HCT116 (cell line): ENCODE measurements at regions of chr17 and their contacts with region 1.

Region 1: DNA sequence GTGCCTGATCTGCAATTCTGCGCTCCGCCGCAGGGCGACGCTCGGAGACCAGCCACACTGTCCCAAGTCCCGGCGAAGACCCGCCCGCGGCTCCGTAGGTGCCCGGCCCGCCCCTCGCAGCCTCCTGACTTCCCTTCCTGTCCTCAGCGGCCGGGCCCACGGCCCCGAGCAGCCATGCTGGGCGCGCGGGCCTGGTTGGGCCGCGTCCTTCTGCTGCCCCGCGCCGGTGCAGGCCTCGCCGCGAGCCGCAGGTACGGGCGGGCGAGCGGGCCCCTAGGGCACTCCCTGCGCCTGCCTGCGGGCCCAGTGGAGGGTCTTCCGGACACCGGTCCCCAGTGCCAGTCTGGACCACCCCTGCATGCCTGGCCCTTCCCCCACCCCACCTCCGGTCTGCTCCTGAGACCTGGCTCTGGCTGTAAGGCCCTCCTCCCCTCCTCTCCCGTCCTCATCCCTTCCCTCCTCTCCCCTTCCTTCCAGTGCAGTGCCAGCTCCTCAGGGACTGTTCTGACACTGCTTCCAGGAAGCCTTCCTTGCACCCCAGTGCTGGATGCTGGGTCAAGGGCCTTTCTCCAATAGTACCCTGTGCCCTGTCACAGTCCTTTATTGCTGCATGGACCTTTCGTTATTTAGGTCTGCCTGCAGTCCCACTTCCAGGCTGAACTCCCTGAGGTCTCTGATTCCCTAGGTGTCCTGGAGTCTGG is at the start of gene SPATA20:
- DNase-seq: peak; percentile 80
- ATAC-seq: peak; percentile 75
- H3K4me3 ChIP-seq: peak within 1 kb of the TSS; percentile 65 to 85
- H3K27ac ChIP-seq: peak within 1 kb of the TSS; percentile 75
- H3K4me1 ChIP-seq: peaks cover 27 to 58% of the 10 kb centered on the region in 2 experiments
- H3K27me3 ChIP-seq: no peaks in the 10 kb centered on the region
- CTCF ChIP-seq: peak in 2 of 3 experiments; percentile 98 to 100; a peak in 4 of 6 replicates
- POLR2A ChIP-seq: peak; percentile 79
- RAD21 ChIP-seq: no peak
- total RNA-seq, gene SPATA20: 57.5 TPM

Region 2: DNA sequence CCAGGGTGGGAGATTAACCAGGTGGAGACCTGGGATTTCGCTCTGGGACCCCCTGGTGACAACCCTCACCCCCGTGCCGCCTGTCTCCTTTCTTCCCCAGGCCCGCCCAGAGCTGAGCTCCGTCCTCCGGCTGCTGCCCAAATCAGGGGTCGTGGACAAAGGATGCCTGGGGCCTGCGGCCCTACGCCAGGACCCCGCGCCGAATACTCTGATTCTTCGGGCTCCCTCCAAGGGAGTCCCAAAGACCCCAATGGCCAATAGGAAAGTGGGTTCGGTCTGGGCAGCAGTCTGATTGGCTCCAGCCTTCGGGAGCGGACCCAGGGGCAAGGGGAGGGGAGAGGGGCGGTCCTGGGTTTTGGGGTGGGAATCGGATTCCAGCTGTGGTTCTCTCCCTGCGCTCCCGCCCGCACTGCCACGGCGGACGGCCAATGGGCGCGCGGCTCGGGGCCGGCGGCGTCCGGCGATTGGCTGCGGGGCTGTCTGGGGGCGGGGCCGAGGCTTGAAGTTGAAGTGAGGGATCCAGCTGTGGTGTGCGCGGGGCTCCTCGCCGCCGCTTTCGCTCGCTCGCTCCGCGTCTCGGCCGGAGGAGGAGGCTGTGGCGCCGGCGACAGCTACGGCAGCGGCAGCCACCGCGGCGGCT is 13.1 kb after region 1 on chr17 and contains the start of gene CACNA1G:
- CTCF ChIA-PET with region 1: interaction called, 22 read pairs
- POLR2A ChIA-PET with region 1: interaction called, 8 read pairs
- RAD21 ChIA-PET with region 1: interaction called, 4 to 8 read pairs
- intact Hi-C with region 1: no loop called
- DNase-seq: peak; percentile 80
- ATAC-seq: peak; percentile 93
- H3K4me3 ChIP-seq: peak within 1 kb of the TSS; percentile 54 to 68
- H3K27ac ChIP-seq: peak within 1 kb of the TSS; percentile 43; the same call in 1 of the 2 replicates
- H3K4me1 ChIP-seq: peaks cover 6 to 18% of the 10 kb centered on the region in 2 experiments; a peak in 3 of 4 replicates
- H3K27me3 ChIP-seq: no peaks in the 10 kb centered on the region
- CTCF ChIP-seq: no peak
- POLR2A ChIP-seq: peak; percentile 64
- RAD21 ChIP-seq: no peak
- total RNA-seq, gene CACNA1G: 3.4 TPM

Region 3: DNA sequence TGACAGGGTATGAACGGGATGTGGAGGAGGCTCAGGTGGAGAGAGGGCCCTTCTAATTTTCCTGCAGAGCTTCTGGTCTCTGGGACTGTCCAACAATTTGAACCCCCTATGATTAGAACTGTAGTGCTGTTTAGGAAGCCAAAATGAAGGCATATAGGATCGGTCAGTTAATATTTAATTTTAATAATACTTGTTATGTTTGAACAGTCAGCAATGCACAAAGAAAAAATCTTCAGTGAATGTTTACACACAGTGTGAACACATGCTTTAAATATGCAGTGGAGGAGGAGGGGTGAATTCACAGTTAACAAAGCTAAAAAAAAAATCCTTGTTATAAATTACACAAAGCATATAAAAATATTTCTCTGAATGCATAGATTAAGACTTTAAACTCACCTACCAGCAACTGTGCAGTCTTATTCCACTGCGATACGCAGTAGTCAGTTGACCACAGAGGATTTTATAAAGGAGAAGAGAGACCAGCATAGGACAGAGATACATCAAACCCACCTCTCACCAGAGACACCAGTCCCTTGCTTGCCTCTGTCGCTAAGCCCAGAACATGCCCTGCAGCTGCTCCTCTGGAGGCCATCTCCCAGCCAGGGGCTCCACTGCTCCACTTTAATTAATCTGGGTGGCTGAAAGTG is 146.0 kb after region 1 on chr17:
- CTCF ChIA-PET with region 1: interaction called, 38 read pairs
- POLR2A ChIA-PET with region 1: no interaction called
- RAD21 ChIA-PET with region 1: interaction called in 1 of 2 experiments, 5 read pairs
- intact Hi-C with region 1: loop called (anchors 1 kb)
- DNase-seq: no peak
- ATAC-seq: no peak
- H3K4me3 ChIP-seq: no peak overlapping the region
- H3K27ac ChIP-seq: no peak overlapping the region
- H3K4me1 ChIP-seq: peaks cover 45 to 65% of the 10 kb centered on the region in 2 experiments
- H3K27me3 ChIP-seq: no peaks in the 10 kb centered on the region
- CTCF ChIP-seq: no peak
- POLR2A ChIP-seq: no peak
- RAD21 ChIP-seq: no peak

Region 4: DNA sequence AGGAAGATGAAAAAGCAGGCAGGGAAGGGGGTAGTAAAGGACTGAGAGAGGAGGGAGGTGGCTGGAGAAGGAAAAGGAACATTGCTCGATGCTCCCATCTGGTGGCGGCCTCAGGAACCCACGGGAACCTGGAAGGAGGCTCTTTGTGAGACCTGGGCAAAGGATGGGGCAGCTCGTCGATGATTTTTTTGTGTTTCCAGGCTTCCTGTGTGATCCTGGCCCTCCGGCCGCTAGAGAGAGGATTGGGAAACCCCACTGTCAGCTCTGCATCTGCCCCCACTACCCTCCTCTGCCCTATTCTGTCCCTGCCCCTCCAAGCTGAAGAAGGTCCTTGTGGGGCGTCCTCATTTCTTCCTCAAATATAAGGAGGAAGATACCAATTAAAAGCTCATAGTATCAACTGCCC is 294.8 kb after region 1 on chr17:
- CTCF ChIA-PET with region 1: interaction called, 10 read pairs
- POLR2A ChIA-PET with region 1: no interaction called
- RAD21 ChIA-PET with region 1: interaction called in 1 of 2 experiments, 3 read pairs
- intact Hi-C with region 1: loop called (anchors 1 kb)
- DNase-seq: peak; percentile 61
- ATAC-seq: peak; percentile 95
- H3K4me3 ChIP-seq: no peak overlapping the region
- H3K27ac ChIP-seq: no peak overlapping the region
- H3K4me1 ChIP-seq: peaks cover 0 to 22% of the 10 kb centered on the region in 2 experiments; a peak in 2 of 4 replicates
- H3K27me3 ChIP-seq: no peaks in the 10 kb centered on the region
- CTCF ChIP-seq: peak; percentile 94 to 97 (median 97)
- POLR2A ChIP-seq: no peak
- RAD21 ChIP-seq: peak; percentile 96

Region 5: DNA sequence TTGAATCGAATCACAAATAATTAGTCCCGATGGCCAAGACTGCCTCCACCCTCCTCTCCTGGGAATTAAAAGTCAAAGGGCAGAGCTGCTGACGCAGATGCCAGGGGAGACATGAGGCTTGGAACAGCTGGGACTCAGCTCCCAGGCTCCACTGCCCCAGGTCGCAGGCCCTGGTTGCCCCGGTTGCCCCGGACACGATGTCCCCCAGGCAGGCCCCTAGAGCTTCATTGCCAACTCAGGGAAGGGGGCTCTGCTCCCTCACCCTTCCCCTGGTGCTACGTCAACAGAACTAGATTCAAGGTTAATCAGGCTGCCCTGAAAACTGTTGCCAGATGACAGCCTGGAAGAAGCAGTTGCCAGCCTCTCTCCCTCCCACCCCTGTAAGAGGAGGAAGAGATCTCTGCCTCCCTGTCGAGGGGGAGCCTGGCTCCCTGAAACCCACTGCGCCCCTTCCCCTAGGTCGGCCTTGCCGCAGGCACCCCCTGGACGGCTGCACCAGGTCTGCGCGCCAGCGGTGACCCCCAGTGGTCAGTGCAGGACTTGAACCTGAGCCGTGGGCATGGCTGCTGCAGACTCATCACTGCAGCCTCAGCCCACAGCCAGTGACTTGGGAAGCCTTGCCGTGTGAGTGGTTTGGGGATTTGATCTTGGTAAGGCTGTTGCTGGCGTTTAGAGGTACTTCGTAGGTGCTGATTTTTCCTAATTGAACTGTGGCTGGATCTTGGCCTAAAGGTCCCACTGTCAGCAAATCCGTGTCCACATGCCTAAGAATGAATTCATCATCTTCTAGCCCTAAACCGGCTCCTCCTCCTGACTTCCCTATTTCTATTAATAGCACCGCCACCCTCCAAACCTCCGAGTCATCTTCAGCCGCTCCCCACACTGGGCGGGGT is 403.1 kb after region 1 on chr17:
- CTCF ChIA-PET with region 1: no interaction called
- POLR2A ChIA-PET with region 1: no interaction called
- RAD21 ChIA-PET with region 1: no interaction called
- intact Hi-C with region 1: loop called (anchors 2 kb)
- DNase-seq: peak; percentile 88
- ATAC-seq: peak; percentile 87
- H3K4me3 ChIP-seq: peak overlapping the region; percentile 29 to 42
- H3K27ac ChIP-seq: peak overlapping the region; percentile 79
- H3K4me1 ChIP-seq: peaks cover 74 to 97% of the 10 kb centered on the region in 2 experiments
- H3K27me3 ChIP-seq: no peaks in the 10 kb centered on the region
- CTCF ChIP-seq: peak; percentile 86 to 99 (median 97)
- POLR2A ChIP-seq: no peak
- RAD21 ChIP-seq: peak; percentile 100